ENCODE measurements at regions of chr1 and their contacts with region 1.

Region 1: DNA sequence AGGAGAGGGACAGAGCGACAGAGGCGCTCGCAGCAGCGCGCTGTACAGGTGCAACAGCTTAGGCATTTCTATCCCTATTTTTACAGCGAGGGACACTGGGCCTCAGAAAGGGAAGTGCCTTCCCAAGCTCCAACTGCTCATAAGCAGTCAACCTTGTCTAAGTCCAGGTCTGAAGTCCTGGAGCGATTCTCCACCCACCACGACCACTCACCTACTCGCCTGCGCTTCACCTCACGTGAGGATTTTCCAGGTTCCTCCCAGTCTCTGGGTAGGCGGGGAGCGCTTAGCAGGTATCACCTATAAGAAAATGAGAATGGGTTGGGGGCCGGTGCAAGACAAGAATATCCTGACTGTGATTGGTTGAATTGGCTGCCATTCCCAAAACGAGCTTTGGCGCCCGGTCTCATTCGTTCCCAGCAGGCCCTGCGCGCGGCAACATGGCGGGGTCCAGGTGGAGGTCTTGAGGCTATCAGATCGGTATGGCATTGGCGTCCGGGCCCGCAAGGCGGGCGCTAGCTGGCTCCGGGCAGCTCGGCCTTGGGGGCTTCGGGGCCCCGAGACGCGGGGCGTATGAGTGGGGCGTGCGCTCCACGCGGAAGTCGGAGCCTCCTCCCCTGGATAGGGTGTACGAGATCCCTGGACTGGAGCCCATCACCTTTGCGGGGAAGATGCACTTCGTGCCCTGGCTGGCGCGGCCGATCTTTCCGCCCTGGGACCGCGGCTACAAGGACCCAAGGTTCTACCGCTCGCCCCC is at the starts of genes CYB5RL and MRPL37:
- DNase-seq: peak; percentile 73 to 91
- H3K4me3 ChIP-seq: peak within 1 kb of the TSS; percentile 91 to 99 (median 96)
- H3K27ac ChIP-seq: peak within 1 kb of the TSS; percentile 84
- H3K4me1 ChIP-seq: peaks cover 0 to 13% (median 6%) of the 10 kb centered on the region in 4 experiments; a peak in 6 of 7 replicates
- H3K27me3 ChIP-seq: no peaks in the 10 kb centered on the region
- CTCF ChIP-seq: no peak
- EP300 ChIP-seq: no peak
- POLR2A ChIP-seq: peak; percentile 78 to 98
- RAD21 ChIP-seq: no peak
- total RNA-seq, gene CYB5RL: 14.1 and 15.1 TPM in 2 replicates
- total RNA-seq, gene MRPL37: 126 and 129 TPM in 2 replicates

Region 2: GRCh38 chr1:54220004-54220811 is 20.3 kb after region 1 on chr1:
- CTCF ChIA-PET with region 1: interaction called, 3 read pairs
- POLR2A ChIA-PET with region 1: interaction called, 50 read pairs
- DNase-seq: no peak
- H3K4me3 ChIP-seq: no peak overlapping the region
- H3K27ac ChIP-seq: no peak overlapping the region
- H3K4me1 ChIP-seq: peaks cover 0 to 4% (median 2%) of the 10 kb centered on the region in 4 experiments; a peak in 3 of 7 replicates
- H3K27me3 ChIP-seq: no peaks in the 10 kb centered on the region
- CTCF ChIP-seq: no peak
- EP300 ChIP-seq: no peak
- POLR2A ChIP-seq: no peak
- RAD21 ChIP-seq: no peak

Region 3: GRCh38 chr1:54227091-54227602 is 27.2 kb after region 1 on chr1:
- CTCF ChIA-PET with region 1: interaction called, 9 read pairs
- POLR2A ChIA-PET with region 1: interaction called, 50 read pairs
- DNase-seq: no peak
- H3K4me3 ChIP-seq: no peak overlapping the region
- H3K27ac ChIP-seq: no peak overlapping the region
- H3K4me1 ChIP-seq: peaks cover 0 to 10% (median 6%) of the 10 kb centered on the region in 4 experiments; a peak in 3 of 7 replicates
- H3K27me3 ChIP-seq: no peaks in the 10 kb centered on the region
- CTCF ChIP-seq: no peak
- EP300 ChIP-seq: no peak
- POLR2A ChIP-seq: no peak
- RAD21 ChIP-seq: no peak

Measured in H1 (cell line).